HepG2 (cell line): ENCODE measurements at regions of chr5 and their contacts with region 1.

Region 1: DNA sequence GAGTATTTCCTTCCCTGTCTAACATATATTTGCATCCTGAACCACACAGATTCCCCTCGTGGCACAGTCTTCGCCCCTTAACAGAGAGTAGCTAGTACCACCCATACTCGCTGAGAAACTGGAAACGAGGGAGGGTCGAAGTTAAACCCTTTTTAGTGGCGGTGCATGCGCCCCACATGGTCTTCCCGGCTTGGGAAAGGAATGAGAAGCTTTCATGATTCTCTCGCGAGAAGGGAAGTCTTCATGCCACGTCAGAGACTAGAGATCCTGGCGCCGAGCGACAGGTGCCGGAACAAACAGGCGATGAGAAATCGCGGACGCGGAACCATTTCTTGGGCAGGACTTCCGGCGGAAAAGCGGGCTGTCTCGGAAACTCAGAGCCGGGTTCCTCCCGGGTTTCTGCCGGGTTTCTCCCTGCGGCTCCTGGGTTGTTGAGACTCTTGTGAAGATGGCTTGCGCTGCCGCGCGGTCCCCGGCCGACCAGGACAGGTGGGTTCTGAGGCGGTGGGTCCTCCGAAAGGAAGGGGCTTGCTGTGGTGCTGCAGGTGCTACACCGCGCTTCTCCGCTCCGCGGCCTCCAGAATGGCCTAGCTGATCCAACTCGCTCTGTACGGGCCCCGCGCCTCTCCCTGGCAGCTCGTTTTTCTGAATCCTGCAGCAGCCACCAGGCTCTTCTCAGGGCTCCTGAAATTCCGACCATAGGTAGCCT is at the start of gene SRP19:
- DNase-seq: peak; percentile 97
- ATAC-seq: peak; percentile 96
- H3K4me3 ChIP-seq: peak within 1 kb of the TSS; percentile 85 to 100 (median 93)
- H3K27ac ChIP-seq: peak within 1 kb of the TSS; percentile 89
- H3K4me1 ChIP-seq: peaks cover 32% of the 10 kb centered on the region
- H3K27me3 ChIP-seq: no peaks in the 10 kb centered on the region; a peak in 1 of 5 replicates
- CTCF ChIP-seq: no peak
- EP300 ChIP-seq: 0 out of 4 replicates have a peak, but pooled peaks of 1 of the 2 experiments have one; percentile 13
- POLR2A ChIP-seq: peak; percentile 68 to 80; a peak in 3 of 4 replicates
- RAD21 ChIP-seq: peak; percentile 25; the same call in 1 of the 2 replicates
- total RNA-seq, gene SRP19: 143 and 214 TPM in 2 replicates

Region 2: GRCh38 chr5:112724901-112725300 is 136.2 kb before region 1 on chr5:
- CTCF ChIA-PET with region 1: no interaction called
- POLR2A ChIA-PET with region 1: no interaction called
- in situ Hi-C with region 1: no loop called
- intact Hi-C with region 1: no loop called
- DNase-seq: no peak
- ATAC-seq: no peak
- H3K4me3 ChIP-seq: no peak overlapping the region
- H3K27ac ChIP-seq: no peak overlapping the region
- H3K4me1 ChIP-seq: no peaks in the 10 kb centered on the region
- H3K27me3 ChIP-seq: no peaks in the 10 kb centered on the region
- CTCF ChIP-seq: no peak
- EP300 ChIP-seq: no peak
- POLR2A ChIP-seq: no peak
- RAD21 ChIP-seq: no peak

Region 3: GRCh38 chr5:112848116-112848811 is 12.8 kb before region 1 on chr5:
- CTCF ChIA-PET with region 1: no interaction called
- POLR2A ChIA-PET with region 1: interaction called, 12 read pairs
- in situ Hi-C with region 1: no loop called
- intact Hi-C with region 1: no loop called
- DNase-seq: peak; percentile 76
- ATAC-seq: peak; percentile 99
- H3K4me3 ChIP-seq: peak overlapping the region in 1 of 3 experiments; percentile 39; a peak in 1 of 6 replicates
- H3K27ac ChIP-seq: no peak overlapping the region
- H3K4me1 ChIP-seq: peaks cover 16% of the 10 kb centered on the region
- H3K27me3 ChIP-seq: no peaks in the 10 kb centered on the region
- CTCF ChIP-seq: peak; percentile 78
- EP300 ChIP-seq: no peak
- POLR2A ChIP-seq: no peak
- RAD21 ChIP-seq: no peak